Calu3 (cell line): ENCODE measurements at regions of chr11 and their contacts with region 1.

Region 1: DNA sequence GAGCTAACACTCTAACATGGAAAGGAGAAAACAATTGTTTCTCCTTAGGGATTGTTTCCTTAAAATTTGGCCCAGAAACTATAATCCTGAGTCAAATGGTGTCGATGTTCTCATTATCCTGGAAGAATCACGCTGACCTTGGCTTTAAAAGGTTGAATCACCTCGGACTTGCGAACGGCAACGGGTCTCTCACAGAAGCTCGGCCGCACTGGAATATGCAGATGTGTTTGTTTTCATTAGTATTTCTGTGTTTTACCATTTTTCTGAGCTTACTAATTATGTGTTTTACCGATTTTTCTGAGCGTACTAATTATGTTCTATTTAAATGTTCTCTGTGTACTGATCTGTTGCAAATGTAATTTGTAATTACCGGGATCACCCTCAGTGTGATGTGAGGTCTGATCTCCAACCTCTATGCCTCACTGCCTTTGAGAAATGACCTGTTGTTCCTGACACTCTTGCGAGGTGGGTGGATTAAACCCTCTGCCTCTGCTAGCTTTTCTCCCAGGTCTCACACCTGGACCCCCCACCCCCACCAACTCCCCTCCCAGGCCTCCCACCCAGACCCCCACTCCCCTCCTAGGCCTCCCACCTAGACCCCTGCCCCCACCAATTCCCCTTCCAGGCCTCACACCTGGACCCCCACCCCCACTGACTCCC is 38.3 kb upstream of the BRSK2 start:
- DNase-seq: no peak
- H3K4me3 Mint-ChIP-seq: no peak overlapping the region
- H3K27ac Mint-ChIP-seq: no peak overlapping the region
- H3K4me1 Mint-ChIP-seq: peaks cover 6% of the 10 kb centered on the region
- H3K27me3 Mint-ChIP-seq: peaks cover 76% of the 10 kb centered on the region
- CTCF ChIP-seq: no peak

Region 2: DNA sequence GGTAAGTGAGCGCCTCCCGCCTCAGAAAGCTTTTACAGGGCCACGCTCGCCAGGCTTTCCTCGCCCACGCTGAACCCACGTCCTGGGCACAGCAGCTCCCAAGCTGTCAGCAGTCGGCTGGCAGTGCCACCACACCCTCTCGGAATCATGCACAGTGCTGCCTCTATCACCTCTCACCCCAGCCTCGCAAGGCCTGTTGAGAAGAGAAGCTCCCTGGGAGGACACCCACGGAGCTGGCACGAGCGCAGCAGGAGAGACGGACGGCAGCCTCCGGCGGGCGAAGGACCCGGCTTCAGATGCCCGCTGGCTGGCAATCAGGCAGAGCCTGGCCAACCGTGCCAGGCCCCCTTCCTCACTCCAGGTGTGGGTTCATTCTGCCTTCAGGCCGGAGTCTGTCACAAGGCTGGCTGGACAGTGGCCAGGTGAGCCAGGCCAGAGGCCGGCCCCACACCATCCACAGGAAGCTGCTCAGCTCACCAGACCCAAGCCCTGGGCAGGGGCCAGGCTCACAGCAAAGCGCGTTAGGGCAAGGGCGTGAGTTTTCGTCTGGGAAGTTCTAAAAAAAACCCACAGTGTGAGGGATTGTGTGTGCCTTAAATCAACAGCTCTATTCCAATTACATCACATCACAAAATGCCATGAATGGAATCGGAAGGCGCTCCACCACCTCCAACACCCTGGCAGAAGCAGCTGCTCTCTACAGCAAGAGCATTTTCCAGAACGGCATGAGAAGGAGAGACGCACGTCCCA is 75.2 kb before region 1 on chr11:
- CTCF ChIA-PET with region 1: no interaction called
- intact Hi-C with region 1: no loop called
- DNase-seq: no peak
- H3K4me3 Mint-ChIP-seq: no peak overlapping the region
- H3K27ac Mint-ChIP-seq: no peak overlapping the region
- H3K4me1 Mint-ChIP-seq: no peaks in the 10 kb centered on the region
- H3K27me3 Mint-ChIP-seq: no peaks in the 10 kb centered on the region
- CTCF ChIP-seq: no peak

Region 3: GRCh38 chr11:1338201-1339065 is 13.0 kb before region 1 on chr11:
- CTCF ChIA-PET with region 1: no interaction called
- intact Hi-C with region 1: loop called (anchors 1 kb)
- DNase-seq: no peak
- H3K4me3 Mint-ChIP-seq: peak overlapping the region; percentile 24
- H3K27ac Mint-ChIP-seq: peak overlapping the region; percentile 22
- H3K4me1 Mint-ChIP-seq: no peaks in the 10 kb centered on the region
- H3K27me3 Mint-ChIP-seq: peaks cover 3% of the 10 kb centered on the region
- CTCF ChIP-seq: no peak